Mammary epithelial cell (primary cell): ENCODE measurements at regions of chrX and their contacts with region 1.

Region 1: DNA sequence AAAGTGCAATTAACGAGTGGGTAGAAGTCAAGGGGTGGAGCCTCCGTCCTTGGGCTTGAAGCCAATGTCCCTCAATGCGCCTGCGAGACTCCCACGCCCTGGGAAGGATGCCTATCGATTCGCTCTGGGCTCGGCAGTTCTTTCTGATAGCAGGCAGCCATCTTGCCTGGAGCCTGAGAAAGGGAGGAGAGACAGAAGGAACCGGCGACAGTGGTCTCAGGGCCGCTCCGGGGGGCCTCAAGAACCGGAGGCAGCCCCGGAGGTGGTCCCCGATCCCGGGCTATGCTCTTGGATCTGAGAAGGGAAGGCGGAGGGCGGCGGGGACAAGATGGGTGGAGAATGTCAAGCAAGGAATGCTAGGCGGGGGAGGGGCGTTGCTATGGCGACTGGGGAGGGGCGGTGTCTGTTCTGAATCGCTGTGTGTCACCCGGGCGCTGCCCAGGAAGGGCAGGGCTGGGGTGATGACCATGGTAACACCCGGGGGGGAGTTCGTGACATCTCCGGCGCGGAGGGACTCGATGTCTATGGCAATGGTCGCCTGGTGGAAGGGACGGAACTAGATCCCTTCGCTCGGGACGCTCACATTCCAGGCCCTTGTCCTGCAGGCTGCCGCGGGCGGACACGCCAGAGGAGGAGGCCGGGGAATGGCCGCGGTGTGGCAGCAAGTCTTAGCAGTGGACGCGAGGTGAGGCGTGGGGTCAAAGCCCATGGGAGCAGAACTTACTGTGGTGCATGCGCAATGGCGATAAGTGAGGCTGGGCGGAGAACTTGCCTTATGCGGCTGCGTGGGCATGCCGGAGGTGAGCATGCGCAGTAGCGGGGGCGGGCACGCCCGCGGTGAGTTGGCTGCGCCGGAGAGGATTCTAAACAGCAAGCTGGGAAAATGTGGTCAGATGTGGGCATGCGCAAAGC is at the start of gene WDR13:
- DNase-seq: peak; percentile 87
- H3K4me3 ChIP-seq: peak within 1 kb of the TSS; percentile 40 to 82 (median 65)
- H3K27ac ChIP-seq: peak within 1 kb of the TSS; percentile 89
- H3K4me1 ChIP-seq: peaks cover 7% of the 10 kb centered on the region
- H3K27me3 ChIP-seq: no peaks in the 10 kb centered on the region
- CTCF ChIP-seq: no peak
- total RNA-seq, gene WDR13: 80.7 to 84.8 TPM

Region 2: GRCh38 chrX:48574270-48575266 is 23.0 kb before region 1 on chrX and contains the start of gene RBM3:
- CTCF ChIA-PET with region 1: no interaction called
- dilution Hi-C with region 1: no loop called
- in situ Hi-C with region 1: no loop called
- intact Hi-C with region 1: loop called (anchors 1 kb)
- DNase-seq: peak; percentile 88
- H3K4me3 ChIP-seq: peak within 1 kb of the TSS; percentile 83 to 86 (median 86)
- H3K27ac ChIP-seq: peak within 1 kb of the TSS; percentile 85
- H3K4me1 ChIP-seq: peaks cover 20% of the 10 kb centered on the region
- H3K27me3 ChIP-seq: no peaks in the 10 kb centered on the region
- CTCF ChIP-seq: peak; percentile 5 to 39
- total RNA-seq, gene RBM3: 246 to 289 TPM

Region 3: DNA sequence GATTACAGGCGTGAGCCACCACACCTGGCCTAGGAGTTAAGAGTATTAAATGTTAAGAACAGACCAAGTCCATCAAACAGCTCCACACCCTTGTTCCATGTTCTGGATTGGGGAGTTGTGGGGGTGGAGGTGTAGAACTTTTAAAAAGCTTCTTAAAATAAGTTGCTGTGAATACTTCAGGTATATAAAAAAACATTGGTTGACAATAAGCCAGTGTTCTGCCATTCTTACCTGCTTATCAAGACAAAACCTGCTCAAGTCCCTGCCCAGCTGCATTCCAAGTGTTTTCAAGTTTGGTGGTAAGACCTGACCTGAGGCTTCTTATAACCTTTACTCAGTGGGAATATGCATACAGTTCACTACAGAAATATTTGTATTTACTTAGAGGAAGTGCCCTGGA is 16.9 kb before region 1 on chrX:
- CTCF ChIA-PET with region 1: no interaction called
- dilution Hi-C with region 1: no loop called
- in situ Hi-C with region 1: no loop called
- intact Hi-C with region 1: loop called (anchors 1 kb)
- DNase-seq: peak; percentile 59
- H3K4me3 ChIP-seq: no peak overlapping the region
- H3K27ac ChIP-seq: no peak overlapping the region
- H3K4me1 ChIP-seq: peaks cover 16% of the 10 kb centered on the region
- H3K27me3 ChIP-seq: no peaks in the 10 kb centered on the region
- CTCF ChIP-seq: no peak